ENCODE measurements at regions of chr2 and their contacts with region 1.

Region 1: GRCh38 chr2:20350753-20351554 is at the start of gene PUM2:
- DNase-seq: peak; percentile 95 to 98 (median 97)
- H3K4me3 ChIP-seq: peak within 1 kb of the TSS; percentile 80 to 83
- H3K4me3 Mint-ChIP-seq: peak within 1 kb of the TSS in 7 of 8 donors; percentile 81 to 97 (median 94)
- H3K27ac ChIP-seq: peak within 1 kb of the TSS; percentile 85
- H3K27ac Mint-ChIP-seq: peak within 1 kb of the TSS in 6 of 7 donors; percentile 64 to 93 (median 88)
- H3K4me1 ChIP-seq: peaks cover 64% of the 10 kb centered on the region
- H3K4me1 Mint-ChIP-seq: peaks cover 27 to 40% (median 37%) of the 10 kb centered on the region in 4 donors
- H3K27me3 ChIP-seq: no peaks in the 10 kb centered on the region
- H3K27me3 Mint-ChIP-seq: no peaks in the 10 kb centered on the region
- total RNA-seq, gene PUM2: 161 to 184 TPM

Region 2: DNA sequence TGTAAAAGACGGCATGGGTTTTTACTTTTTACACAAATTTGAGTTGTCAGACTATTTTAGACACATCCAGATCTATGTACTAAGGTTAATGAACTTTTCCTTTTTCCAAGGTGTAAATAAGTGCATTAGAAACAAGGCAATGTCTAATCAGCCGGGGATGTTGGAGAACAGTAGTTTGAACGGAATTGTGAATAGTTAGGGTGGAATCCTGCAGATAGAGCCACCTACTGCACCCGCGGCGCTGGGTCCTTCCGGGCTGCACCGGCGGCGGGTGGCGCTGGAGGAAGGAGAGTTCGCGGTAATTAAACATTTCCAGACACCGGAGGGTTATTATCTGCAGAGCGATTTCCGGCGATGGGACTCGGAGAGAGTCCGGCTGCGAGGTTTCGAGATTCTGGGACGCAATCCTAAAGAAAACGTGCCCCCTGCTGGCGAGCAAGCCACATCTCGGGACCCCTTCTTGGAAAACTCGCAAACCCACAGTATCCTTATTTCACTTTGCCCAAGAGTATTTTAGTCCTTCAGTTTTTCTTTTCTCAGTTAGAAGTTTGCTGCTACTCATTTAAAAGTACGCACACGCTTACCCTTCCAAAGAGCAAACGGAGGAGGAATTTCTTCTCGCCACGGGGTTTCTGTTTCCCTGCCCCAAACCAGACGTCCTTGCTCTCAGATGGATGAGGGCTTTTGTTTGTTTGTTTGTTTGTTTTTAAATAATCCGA is 988.0 kb before region 1 on chr2:
- CTCF ChIA-PET with region 1: no interaction called
- POLR2A ChIA-PET with region 1: no interaction called
- intact Hi-C with region 1: loop called (anchors 5 kb)
- DNase-seq: peak in 3 of 5 donors; percentile 42 to 57 (median 43)
- H3K4me3 ChIP-seq: peak overlapping the region; percentile 77 to 87
- H3K4me3 Mint-ChIP-seq: peak overlapping the region; percentile 89 to 98 (median 96)
- H3K27ac ChIP-seq: peak overlapping the region; percentile 15
- H3K27ac Mint-ChIP-seq: peak overlapping the region; percentile 23 to 93 (median 88)
- H3K4me1 ChIP-seq: peaks cover 35% of the 10 kb centered on the region
- H3K4me1 Mint-ChIP-seq: peaks cover 15 to 51% (median 32%) of the 10 kb centered on the region in 4 donors
- H3K27me3 ChIP-seq: peaks cover 34% of the 10 kb centered on the region
- H3K27me3 Mint-ChIP-seq: peaks cover 23 to 33% of the 10 kb centered on the region in 2 donors

Region 3: DNA sequence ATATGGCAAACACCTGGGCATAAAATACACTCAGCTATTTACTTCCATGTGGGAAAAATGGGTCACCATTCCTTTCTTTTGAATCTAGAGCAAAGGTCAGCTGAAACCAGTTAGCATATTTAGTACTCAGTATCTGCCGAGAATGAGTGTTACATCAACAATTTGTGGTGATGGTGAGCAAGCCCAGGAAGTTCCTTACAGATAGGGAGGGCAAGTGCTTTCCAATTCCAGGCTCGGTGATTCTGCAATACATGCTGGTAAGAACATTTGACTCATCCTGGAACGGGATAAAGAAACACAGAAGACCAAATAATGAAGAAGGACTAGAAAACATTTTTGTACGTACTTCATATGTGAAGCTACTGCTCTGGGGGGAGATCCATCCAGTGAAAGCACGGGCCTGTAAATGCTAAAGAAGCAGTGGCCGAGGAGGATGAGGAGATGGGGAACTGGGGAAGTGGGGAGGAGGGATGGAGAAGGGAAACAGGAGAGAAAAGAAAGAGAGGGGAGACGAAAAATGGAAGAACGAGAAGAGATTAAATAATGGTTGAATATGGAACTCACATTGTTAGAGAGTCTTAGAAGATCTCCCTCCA is 701.1 kb before region 1 on chr2:
- CTCF ChIA-PET with region 1: no interaction called
- POLR2A ChIA-PET with region 1: no interaction called
- intact Hi-C with region 1: no loop called
- DNase-seq: no peak
- H3K4me3 ChIP-seq: no peak overlapping the region
- H3K4me3 Mint-ChIP-seq: no peak overlapping the region
- H3K27ac ChIP-seq: no peak overlapping the region
- H3K27ac Mint-ChIP-seq: no peak overlapping the region
- H3K4me1 ChIP-seq: no peaks in the 10 kb centered on the region
- H3K4me1 Mint-ChIP-seq: no peaks in the 10 kb centered on the region
- H3K27me3 ChIP-seq: no peaks in the 10 kb centered on the region
- H3K27me3 Mint-ChIP-seq: peaks cover 9 to 10% of the 10 kb centered on the region in 2 donors

Region 4: GRCh38 chr2:20051532-20052228 is 299.3 kb before region 1 on chr2 and contains the start of gene LAPTM4A:
- CTCF ChIA-PET with region 1: no interaction called
- POLR2A ChIA-PET with region 1: no interaction called
- intact Hi-C with region 1: loop called (anchors 1 kb)
- DNase-seq: peak; percentile 97 to 99 (median 99)
- H3K4me3 ChIP-seq: peak within 1 kb of the TSS; percentile 76 to 90
- H3K4me3 Mint-ChIP-seq: no peak within 1 kb of the TSS
- H3K27ac ChIP-seq: peak within 1 kb of the TSS; percentile 94
- H3K27ac Mint-ChIP-seq: no peak within 1 kb of the TSS
- H3K4me1 ChIP-seq: peaks cover 35% of the 10 kb centered on the region
- H3K4me1 Mint-ChIP-seq: peaks cover 23 to 32% (median 26%) of the 10 kb centered on the region in 4 donors
- H3K27me3 ChIP-seq: peaks cover 8% of the 10 kb centered on the region
- H3K27me3 Mint-ChIP-seq: peaks cover 13 to 15% of the 10 kb centered on the region in 2 donors
- total RNA-seq, gene LAPTM4A: 47.4 to 50.8 TPM

Region 5: DNA sequence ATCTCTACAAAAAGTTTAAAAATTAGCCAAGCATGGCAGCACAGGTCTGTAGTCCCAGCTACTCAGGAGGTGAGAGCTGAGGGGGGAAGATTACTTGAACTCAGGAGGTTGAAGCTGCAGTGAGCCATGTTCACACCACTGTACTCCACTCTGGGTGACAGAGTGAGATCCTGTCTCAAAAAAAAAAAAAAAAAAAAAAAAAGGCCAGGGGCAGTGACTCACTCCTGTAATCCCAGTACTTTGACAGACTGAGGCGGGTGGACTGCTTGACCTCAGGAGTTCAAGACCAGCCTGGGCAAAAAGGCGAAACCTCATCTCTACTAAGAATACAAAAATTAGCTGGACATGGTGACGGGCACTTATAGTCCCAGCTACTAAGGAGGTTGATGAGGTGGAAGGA is 37.3 kb before region 1 on chr2:
- CTCF ChIA-PET with region 1: interaction called, 3 read pairs
- POLR2A ChIA-PET with region 1: no interaction called
- intact Hi-C with region 1: loop called (anchors 5 kb)
- DNase-seq: no peak
- H3K4me3 ChIP-seq: no peak overlapping the region
- H3K4me3 Mint-ChIP-seq: no peak overlapping the region
- H3K27ac ChIP-seq: no peak overlapping the region
- H3K27ac Mint-ChIP-seq: no peak overlapping the region
- H3K4me1 ChIP-seq: peaks cover 20% of the 10 kb centered on the region
- H3K4me1 Mint-ChIP-seq: peaks cover 16 to 47% (median 30%) of the 10 kb centered on the region in 4 donors
- H3K27me3 ChIP-seq: no peaks in the 10 kb centered on the region
- H3K27me3 Mint-ChIP-seq: no peaks in the 10 kb centered on the region

Region 6: DNA sequence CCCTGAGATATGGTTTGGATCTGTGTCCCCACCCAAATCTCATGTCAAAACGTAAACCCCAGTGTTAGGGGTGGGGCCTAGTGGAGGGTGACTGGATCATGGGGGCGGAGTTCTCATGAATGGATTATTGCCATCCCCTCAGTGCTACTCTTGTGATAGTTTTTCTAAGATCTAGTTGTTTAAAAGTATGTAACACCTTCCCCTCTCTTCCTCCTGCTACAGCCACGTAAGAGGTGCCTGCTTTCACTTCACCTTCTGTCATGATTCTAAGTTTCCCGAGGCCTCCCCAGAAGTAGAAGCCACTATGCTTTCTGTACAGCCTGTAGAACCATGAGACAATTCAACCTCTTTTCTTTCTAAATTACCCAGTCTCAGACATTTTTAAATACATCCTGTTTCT is 17.2 kb before region 1 on chr2:
- CTCF ChIA-PET with region 1: interaction called, 41 read pairs
- POLR2A ChIA-PET with region 1: interaction called, 4 read pairs
- intact Hi-C with region 1: loop called (anchors 1 kb)
- DNase-seq: no peak
- H3K4me3 ChIP-seq: no peak overlapping the region
- H3K4me3 Mint-ChIP-seq: peak overlapping the region in 6 of 8 donors; percentile 18 to 66 (median 57)
- H3K27ac ChIP-seq: no peak overlapping the region
- H3K27ac Mint-ChIP-seq: peak overlapping the region in 6 of 7 donors; percentile 17 to 91 (median 74)
- H3K4me1 ChIP-seq: peaks cover 72% of the 10 kb centered on the region
- H3K4me1 Mint-ChIP-seq: peaks cover 51 to 96% (median 70%) of the 10 kb centered on the region in 4 donors
- H3K27me3 ChIP-seq: no peaks in the 10 kb centered on the region
- H3K27me3 Mint-ChIP-seq: no peaks in the 10 kb centered on the region

Region 7: GRCh38 chr2:20446917-20447436 is 96.0 kb after region 1 on chr2 and contains the start of gene RHOB:
- CTCF ChIA-PET with region 1: no interaction called
- POLR2A ChIA-PET with region 1: interaction called, 25 read pairs
- intact Hi-C with region 1: loop called (anchors 2 kb)
- DNase-seq: peak; percentile 79 to 88 (median 82)
- H3K4me3 ChIP-seq: peak within 1 kb of the TSS; percentile 47 to 76
- H3K4me3 Mint-ChIP-seq: peak within 1 kb of the TSS; percentile 78 to 86 (median 82)
- H3K27ac ChIP-seq: peak within 1 kb of the TSS; percentile 47
- H3K27ac Mint-ChIP-seq: peak within 1 kb of the TSS in 5 of 7 donors; percentile 61 to 90 (median 75)
- H3K4me1 ChIP-seq: peaks cover 11% of the 10 kb centered on the region
- H3K4me1 Mint-ChIP-seq: peaks cover 0 to 9% (median 3%) of the 10 kb centered on the region in 4 donors
- H3K27me3 ChIP-seq: peaks cover 10% of the 10 kb centered on the region
- H3K27me3 Mint-ChIP-seq: peaks cover 8 to 13% of the 10 kb centered on the region in 2 donors
- total RNA-seq, gene RHOB: 7.9 to 8.9 TPM

Region 8: DNA sequence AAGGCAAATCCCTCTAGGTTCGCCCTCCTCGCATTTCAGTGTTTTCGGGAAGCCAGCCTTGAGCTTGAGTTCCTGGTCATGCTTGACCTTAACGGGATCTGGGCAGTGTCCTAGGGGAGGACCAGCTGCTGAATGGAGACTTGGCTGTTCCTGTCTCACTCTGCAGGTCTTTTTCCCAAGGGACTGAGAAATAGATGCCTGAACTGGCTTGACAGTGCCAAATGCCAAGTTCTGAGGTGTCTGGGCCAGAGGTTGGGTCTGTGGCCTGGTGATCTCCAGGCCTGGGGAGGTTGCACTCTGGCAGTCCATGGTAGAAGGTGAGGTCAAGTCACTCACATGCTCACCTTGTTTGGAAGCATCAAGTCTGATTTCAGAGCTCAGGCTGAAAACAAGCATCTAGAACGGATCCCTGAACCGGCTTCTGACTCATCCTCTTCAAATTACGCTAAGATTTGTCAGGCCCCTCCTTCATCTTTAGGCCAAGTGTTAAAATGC is 115.5 kb after region 1 on chr2:
- CTCF ChIA-PET with region 1: no interaction called
- POLR2A ChIA-PET with region 1: no interaction called
- intact Hi-C with region 1: no loop called
- DNase-seq: no peak
- H3K4me3 ChIP-seq: no peak overlapping the region
- H3K4me3 Mint-ChIP-seq: no peak overlapping the region
- H3K27ac ChIP-seq: no peak overlapping the region
- H3K27ac Mint-ChIP-seq: no peak overlapping the region
- H3K4me1 ChIP-seq: no peaks in the 10 kb centered on the region
- H3K4me1 Mint-ChIP-seq: no peaks in the 10 kb centered on the region
- H3K27me3 ChIP-seq: no peaks in the 10 kb centered on the region
- H3K27me3 Mint-ChIP-seq: peaks cover 0 to under 1% of the 10 kb centered on the region in 2 donors

Region 9: GRCh38 chr2:20822535-20823490 is 471.9 kb after region 1 on chr2 and contains the start of gene LDAH:
- CTCF ChIA-PET with region 1: no interaction called
- POLR2A ChIA-PET with region 1: no interaction called
- intact Hi-C with region 1: loop called (anchors 2 kb)
- DNase-seq: peak; percentile 79 to 84 (median 82)
- H3K4me3 ChIP-seq: peak within 1 kb of the TSS; percentile 81 to 85
- H3K4me3 Mint-ChIP-seq: peak within 1 kb of the TSS; percentile 93 to 99 (median 98)
- H3K27ac ChIP-seq: peak within 1 kb of the TSS; percentile 83
- H3K27ac Mint-ChIP-seq: peak within 1 kb of the TSS; percentile 97 to 100 (median 98)
- H3K4me1 ChIP-seq: peaks cover 3% of the 10 kb centered on the region
- H3K4me1 Mint-ChIP-seq: peaks cover 15 to 36% (median 26%) of the 10 kb centered on the region in 4 donors
- H3K27me3 ChIP-seq: no peaks in the 10 kb centered on the region
- H3K27me3 Mint-ChIP-seq: no peaks in the 10 kb centered on the region
- total RNA-seq, gene LDAH: 22.7 to 23.9 TPM

Measured in CD4-positive, alpha-beta memory T cell (primary cell).